GM12878 (cell line): ENCODE measurements at regions of chr5 and their contacts with region 1.

Region 1: DNA sequence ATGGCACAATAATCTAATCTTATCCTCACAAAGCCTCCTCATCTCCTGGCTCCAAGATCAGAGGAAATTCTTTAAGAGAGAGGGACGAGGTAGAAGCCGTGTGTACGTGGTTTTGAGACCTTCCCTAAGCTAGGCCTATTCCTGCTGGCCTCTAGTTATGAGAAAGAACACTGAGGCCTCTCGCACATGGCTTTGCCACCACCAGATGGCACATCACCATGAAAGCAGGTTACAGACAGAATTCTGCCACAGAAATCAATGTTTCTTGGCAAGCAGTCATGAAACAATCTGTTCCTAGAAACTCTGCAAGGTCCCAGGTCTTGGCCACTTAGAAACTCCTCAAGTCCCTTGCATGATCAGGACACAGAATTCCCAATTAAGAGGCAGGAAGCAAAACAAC is 268.2 kb upstream of the TAS2R1 start:
- DNase-seq: no peak
- ATAC-seq: peak; percentile 63
- H3K4me3 ChIP-seq: no peak overlapping the region
- H3K27ac ChIP-seq: no peak overlapping the region
- H3K4me1 ChIP-seq: no peaks in the 10 kb centered on the region
- H3K27me3 ChIP-seq: no peaks in the 10 kb centered on the region
- CTCF ChIP-seq: peak; percentile 28 to 45 (median 33); a peak in 4 of 6 replicates
- EP300 ChIP-seq: no peak
- POLR2A ChIP-seq: no peak
- RAD21 ChIP-seq: peak; percentile 38; the same call in 1 of the 2 replicates

Region 2: DNA sequence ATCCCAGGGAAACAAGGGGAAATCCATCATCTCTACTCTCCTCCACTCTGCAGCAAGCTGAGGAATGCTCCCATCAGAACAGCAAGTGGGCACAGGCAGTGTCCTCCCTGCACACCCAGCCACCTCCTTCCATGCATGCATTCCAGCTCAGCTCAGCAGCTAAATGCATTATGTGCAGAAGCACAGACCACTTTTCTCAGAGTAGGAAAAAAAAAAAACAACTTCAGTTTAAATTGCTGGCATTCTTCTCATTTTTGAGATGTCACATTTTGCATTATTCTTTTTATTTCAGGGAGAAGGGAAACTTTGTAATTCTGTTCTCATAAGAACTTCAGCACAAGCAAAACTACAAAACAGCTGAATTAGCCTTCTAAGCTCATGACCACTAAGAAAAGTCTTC is 664.6 kb before region 1 on chr5:
- CTCF ChIA-PET with region 1: interaction called, 10 read pairs
- POLR2A ChIA-PET with region 1: no interaction called
- RAD21 ChIA-PET with region 1: no interaction called
- SMC1A ChIA-PET with region 1: no interaction called
- in situ Hi-C with region 1: no loop called
- intact Hi-C with region 1: no loop called
- DNase-seq: no peak
- ATAC-seq: no peak
- H3K4me3 ChIP-seq: no peak overlapping the region
- H3K27ac ChIP-seq: no peak overlapping the region
- H3K4me1 ChIP-seq: no peaks in the 10 kb centered on the region
- H3K27me3 ChIP-seq: no peaks in the 10 kb centered on the region
- CTCF ChIP-seq: no peak
- EP300 ChIP-seq: no peak
- POLR2A ChIP-seq: no peak
- RAD21 ChIP-seq: no peak

Region 3: DNA sequence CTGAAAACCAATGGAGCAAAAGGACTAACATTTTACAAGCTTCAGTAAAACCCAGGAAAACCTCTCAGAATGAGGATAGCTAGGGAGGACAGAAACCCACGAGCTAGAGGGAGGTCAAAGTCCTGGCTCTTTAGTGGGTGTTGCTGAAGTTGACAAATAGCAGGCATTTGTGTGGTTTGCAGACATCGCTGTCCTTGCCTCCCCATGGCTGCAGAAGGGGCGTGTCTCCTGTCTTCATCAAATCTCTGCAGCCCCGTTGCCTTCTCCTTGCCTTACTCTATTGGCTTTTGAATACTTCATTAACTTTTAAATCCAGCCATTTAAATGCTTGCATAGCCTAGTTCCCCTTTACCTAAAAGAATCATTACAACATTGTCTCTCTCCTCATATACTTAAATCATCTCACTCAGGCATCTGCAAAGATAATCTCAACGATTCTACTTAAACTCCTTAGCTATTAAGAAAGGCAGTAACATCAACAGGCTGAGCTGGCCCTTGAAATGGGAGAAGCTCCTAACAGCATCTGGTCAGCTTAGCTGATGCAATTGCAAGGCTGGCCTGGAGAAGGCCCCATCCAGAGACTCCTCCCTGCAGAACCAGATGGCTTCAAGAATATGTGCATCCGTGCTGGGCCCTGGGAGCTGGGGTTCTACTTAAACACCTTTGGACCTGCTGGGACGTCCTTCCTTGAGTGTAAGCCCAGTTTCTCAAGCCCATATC is 115.3 kb before region 1 on chr5:
- CTCF ChIA-PET with region 1: no interaction called
- POLR2A ChIA-PET with region 1: no interaction called
- RAD21 ChIA-PET with region 1: no interaction called
- SMC1A ChIA-PET with region 1: no interaction called
- in situ Hi-C with region 1: no loop called
- intact Hi-C with region 1: no loop called
- DNase-seq: no peak
- ATAC-seq: no peak
- H3K4me3 ChIP-seq: no peak overlapping the region
- H3K27ac ChIP-seq: no peak overlapping the region
- H3K4me1 ChIP-seq: no peaks in the 10 kb centered on the region
- H3K27me3 ChIP-seq: no peaks in the 10 kb centered on the region; a peak in 2 of 4 replicates
- CTCF ChIP-seq: no peak
- EP300 ChIP-seq: no peak
- POLR2A ChIP-seq: no peak
- RAD21 ChIP-seq: no peak

Region 4: GRCh38 chr5:9953691-9954090 is 55.4 kb after region 1 on chr5:
- CTCF ChIA-PET with region 1: no interaction called
- POLR2A ChIA-PET with region 1: no interaction called
- RAD21 ChIA-PET with region 1: no interaction called
- SMC1A ChIA-PET with region 1: no interaction called
- in situ Hi-C with region 1: no loop called
- intact Hi-C with region 1: no loop called
- DNase-seq: no peak
- ATAC-seq: no peak
- H3K4me3 ChIP-seq: no peak overlapping the region
- H3K27ac ChIP-seq: no peak overlapping the region
- H3K4me1 ChIP-seq: peaks cover 1% of the 10 kb centered on the region; the same call in 1 of the 2 replicates
- H3K27me3 ChIP-seq: no peaks in the 10 kb centered on the region
- CTCF ChIP-seq: no peak
- EP300 ChIP-seq: no peak
- POLR2A ChIP-seq: no peak
- RAD21 ChIP-seq: no peak

Region 5: DNA sequence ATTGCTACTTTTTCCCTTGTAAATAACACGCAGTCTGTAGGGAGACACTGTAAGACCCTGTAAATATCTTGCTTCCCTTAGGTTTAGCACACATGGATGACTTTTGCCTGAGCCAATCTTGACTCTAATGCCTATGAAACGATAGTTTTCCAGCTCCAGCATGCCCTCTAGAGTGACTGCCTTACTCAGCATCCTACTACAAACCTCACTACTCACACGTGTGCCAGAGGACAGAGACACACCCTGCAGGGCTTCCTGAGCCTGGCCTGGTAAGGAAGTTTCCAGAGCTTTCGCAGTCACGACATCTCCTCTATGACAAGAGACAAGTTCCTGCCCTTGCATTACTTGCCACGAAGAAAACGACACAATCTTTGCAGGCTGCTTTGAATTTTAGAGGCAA is 213.3 kb after region 1 on chr5:
- CTCF ChIA-PET with region 1: no interaction called
- POLR2A ChIA-PET with region 1: no interaction called
- RAD21 ChIA-PET with region 1: no interaction called
- SMC1A ChIA-PET with region 1: no interaction called
- in situ Hi-C with region 1: no loop called
- intact Hi-C with region 1: loop called (anchors 5 kb)
- DNase-seq: no peak
- ATAC-seq: peak; percentile 83
- H3K4me3 ChIP-seq: no peak overlapping the region
- H3K27ac ChIP-seq: no peak overlapping the region
- H3K4me1 ChIP-seq: no peaks in the 10 kb centered on the region
- H3K27me3 ChIP-seq: no peaks in the 10 kb centered on the region
- CTCF ChIP-seq: peak; percentile 38 to 46 (median 43); a peak in 5 of 6 replicates
- EP300 ChIP-seq: no peak
- POLR2A ChIP-seq: no peak
- RAD21 ChIP-seq: peak; percentile 45; the same call in 1 of the 2 replicates